Posterior vena cava (tissue), 2 donors: ENCODE measurements at regions of chr4 and their contacts with region 1.

Region 1: DNA sequence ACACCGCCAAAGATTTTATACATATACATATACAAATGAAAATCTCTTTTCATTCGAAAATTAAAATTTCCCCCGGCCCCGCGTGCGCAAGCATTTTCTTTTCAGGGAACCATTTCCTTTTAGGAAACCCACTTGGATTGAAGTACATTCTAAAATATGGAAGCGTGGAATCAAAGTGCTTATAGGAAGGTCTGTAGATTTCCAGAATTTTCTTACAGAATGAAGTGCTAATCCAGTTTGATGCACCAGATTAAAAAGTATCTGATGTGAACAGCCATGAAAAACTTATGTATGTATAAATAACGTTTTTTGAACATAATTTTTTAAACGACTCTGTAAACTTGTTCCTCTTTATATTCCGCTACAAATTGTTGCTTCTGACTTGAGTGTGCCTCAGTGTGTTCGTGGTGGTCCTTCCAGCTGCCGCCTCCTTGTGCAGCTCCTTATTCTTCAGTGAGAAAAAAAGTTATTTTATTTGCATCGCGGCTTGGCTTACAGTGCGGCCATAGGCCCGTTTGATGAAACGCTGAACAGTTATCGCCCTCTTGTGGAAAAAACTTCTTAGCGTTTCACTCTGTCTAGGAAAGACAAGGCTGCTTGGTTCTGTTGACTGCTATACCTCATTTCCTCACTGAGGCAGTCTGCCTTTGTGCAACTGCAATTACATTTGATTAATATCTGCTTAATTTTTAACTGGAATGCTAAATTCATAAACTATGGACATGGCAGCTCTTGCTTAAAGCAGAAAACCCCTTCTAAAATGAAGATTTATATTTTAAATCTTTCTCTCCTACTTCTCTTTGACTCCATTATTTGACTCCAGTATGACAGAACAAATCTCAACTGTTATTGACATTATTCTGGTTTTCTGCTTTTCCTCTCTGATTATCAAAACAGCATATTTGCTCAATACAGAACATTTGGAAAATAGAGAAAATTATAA is 4.7 kb upstream of the NKX6-1 start:
- DNase-seq: no peak

Region 2: GRCh38 chr4:83771113-83771705 is 732.6 kb before region 1 on chr4:
- intact Hi-C with region 1: no loop called
- DNase-seq: no peak

Region 3: DNA sequence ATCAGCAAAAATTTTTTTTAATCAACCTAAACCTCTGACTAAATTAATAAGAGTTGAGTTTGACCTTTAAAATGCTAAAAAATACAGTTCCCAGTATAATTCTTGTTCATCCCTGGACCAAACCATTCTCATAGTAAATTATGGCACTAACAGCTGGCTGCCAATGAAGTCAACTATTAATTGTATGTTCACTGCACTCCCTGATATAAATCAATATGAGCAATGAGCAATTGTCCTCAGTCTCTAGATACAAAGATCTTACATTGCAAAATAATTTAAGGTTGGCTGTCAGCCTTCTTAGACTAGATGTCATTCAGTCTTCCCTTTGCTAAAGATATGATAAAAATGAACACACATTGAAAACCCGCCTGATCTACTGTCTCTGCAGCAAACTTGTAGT is 44.0 kb before region 1 on chr4:
- intact Hi-C with region 1: loop called in 1 of 2 experiments (anchors 2 kb)
- DNase-seq: no peak

Region 4: GRCh38 chr4:84547211-84547610 is 43.4 kb after region 1 on chr4:
- intact Hi-C with region 1: no loop called
- DNase-seq: no peak

Region 5: GRCh38 chr4:84573385-84574068 is 69.8 kb after region 1 on chr4:
- intact Hi-C with region 1: no loop called
- DNase-seq: no peak